CD8-positive, alpha-beta T cell (primary cell): ENCODE measurements at regions of chr10 and their contacts with region 1.

Region 1: GRCh38 chr10:122879339-122880273 is at the start of gene FAM24B:
- DNase-seq: peak; percentile 87 to 99 (median 94)
- ATAC-seq: peak; percentile 86
- H3K4me3 ChIP-seq: peak within 1 kb of the TSS; percentile 56 to 75
- H3K4me3 Mint-ChIP-seq: peak within 1 kb of the TSS; percentile 93
- H3K27ac ChIP-seq: peak within 1 kb of the TSS; percentile 60 to 79
- H3K27ac Mint-ChIP-seq: peak within 1 kb of the TSS; percentile 88
- H3K4me1 ChIP-seq: peaks cover 34% of the 10 kb centered on the region
- H3K4me1 Mint-ChIP-seq: peaks cover 53% of the 10 kb centered on the region
- H3K27me3 ChIP-seq: no peaks in the 10 kb centered on the region
- H3K27me3 Mint-ChIP-seq: no peaks in the 10 kb centered on the region
- CTCF ChIP-seq: no peak
- total RNA-seq, gene FAM24B: 12.5 to 12.7 TPM

Region 2: DNA sequence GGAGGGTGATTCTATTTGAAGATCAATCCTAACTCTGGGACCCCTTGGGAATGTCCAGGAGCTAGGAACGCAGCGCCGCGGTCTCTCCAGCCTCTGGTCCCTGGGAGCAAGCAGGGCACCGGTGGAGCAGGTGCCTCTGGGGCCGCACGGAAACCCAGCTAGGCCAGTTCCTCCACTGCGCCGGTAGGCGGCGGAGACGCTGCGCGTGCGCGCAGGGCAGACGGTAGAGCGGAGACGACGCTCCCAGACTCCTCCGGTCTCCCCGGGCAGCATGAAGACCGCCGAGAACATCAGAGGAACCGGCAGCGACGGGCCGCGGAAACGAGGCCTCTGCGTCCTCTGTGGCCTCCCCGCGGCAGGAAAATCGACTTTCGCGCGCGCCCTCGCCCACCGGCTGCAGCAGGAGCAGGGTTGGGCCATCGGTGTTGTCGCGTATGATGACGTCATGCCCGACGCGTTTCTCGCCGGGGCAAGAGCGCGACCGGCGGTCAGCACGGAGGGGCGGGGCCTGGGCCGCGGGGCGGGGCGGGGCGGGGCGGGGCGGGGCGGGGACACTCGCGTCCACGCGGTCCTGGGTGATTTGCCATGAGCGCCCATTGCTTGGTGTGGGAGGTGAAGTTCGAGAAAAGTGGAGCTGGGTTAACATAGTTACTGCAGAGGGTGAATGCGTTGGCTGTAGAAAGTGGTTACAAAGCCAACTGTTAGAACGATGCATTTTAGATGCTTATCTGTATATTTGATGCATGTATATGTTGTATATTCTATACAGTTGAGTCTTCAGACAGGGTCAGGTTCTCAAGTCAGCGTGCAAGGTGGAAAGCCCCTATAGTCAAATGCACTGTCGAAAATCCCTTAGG is 100.8 kb after region 1 on chr10 and contains the start of gene PSTK:
- CTCF ChIA-PET with region 1: no interaction called
- POLR2A ChIA-PET with region 1: no interaction called
- intact Hi-C with region 1: loop called (anchors 1 kb)
- DNase-seq: peak; percentile 78 to 96 (median 86)
- ATAC-seq: peak; percentile 96
- H3K4me3 ChIP-seq: peak within 1 kb of the TSS; percentile 86 to 93
- H3K4me3 Mint-ChIP-seq: peak within 1 kb of the TSS; percentile 95
- H3K27ac ChIP-seq: peak within 1 kb of the TSS; percentile 96 to 97
- H3K27ac Mint-ChIP-seq: peak within 1 kb of the TSS; percentile 98
- H3K4me1 ChIP-seq: peaks cover 12% of the 10 kb centered on the region
- H3K4me1 Mint-ChIP-seq: peaks cover 19% of the 10 kb centered on the region
- H3K27me3 ChIP-seq: no peaks in the 10 kb centered on the region
- H3K27me3 Mint-ChIP-seq: peaks cover 4% of the 10 kb centered on the region
- CTCF ChIP-seq: peak; percentile 91
- total RNA-seq, gene PSTK: 20.5 to 20.9 TPM

Region 3: GRCh38 chr10:123132576-123133477 is 253.2 kb after region 1 on chr10:
- CTCF ChIA-PET with region 1: no interaction called
- POLR2A ChIA-PET with region 1: no interaction called
- intact Hi-C with region 1: loop called in 1 of 2 experiments (anchors 5 kb)
- DNase-seq: peak; percentile 73 to 91 (median 87)
- ATAC-seq: peak; percentile 62
- H3K4me3 ChIP-seq: peak overlapping the region in 1 of 2 experiments; percentile 16
- H3K4me3 Mint-ChIP-seq: peak overlapping the region; percentile 69
- H3K27ac ChIP-seq: no peak overlapping the region
- H3K27ac Mint-ChIP-seq: no peak overlapping the region
- H3K4me1 ChIP-seq: peaks cover 44% of the 10 kb centered on the region
- H3K4me1 Mint-ChIP-seq: peaks cover 33% of the 10 kb centered on the region
- H3K27me3 ChIP-seq: peaks cover 40 to 44% of the 10 kb centered on the region in 2 experiments
- H3K27me3 Mint-ChIP-seq: peaks cover 62% of the 10 kb centered on the region
- CTCF ChIP-seq: peak; percentile 95

Region 4: GRCh38 chr10:124403548-124403947 is 1523.9 kb after region 1 on chr10:
- CTCF ChIA-PET with region 1: no interaction called
- POLR2A ChIA-PET with region 1: no interaction called
- intact Hi-C with region 1: loop called in 1 of 2 experiments (anchors 10 kb)
- DNase-seq: peak in 4 of 9 experiments; percentile 17 to 82 (median 55)
- ATAC-seq: peak; percentile 99
- H3K4me3 ChIP-seq: no peak overlapping the region
- H3K4me3 Mint-ChIP-seq: no peak overlapping the region
- H3K27ac ChIP-seq: peak overlapping the region in 1 of 2 experiments; percentile 38
- H3K27ac Mint-ChIP-seq: peak overlapping the region; percentile 46
- H3K4me1 ChIP-seq: no peaks in the 10 kb centered on the region
- H3K4me1 Mint-ChIP-seq: peaks cover 10% of the 10 kb centered on the region
- H3K27me3 ChIP-seq: no peaks in the 10 kb centered on the region
- H3K27me3 Mint-ChIP-seq: no peaks in the 10 kb centered on the region
- CTCF ChIP-seq: peak; percentile 56